ENCODE measurements at regions of chr15 and their contacts with region 1.

Region 1: GRCh38 chr15:69058830-69059556 is 44.5 kb downstream of the NOX5 start:
- DNase-seq: peak; percentile 86
- ATAC-seq: peak; percentile 55
- H3K4me3 Mint-ChIP-seq: no peak overlapping the region
- H3K27ac Mint-ChIP-seq: no peak overlapping the region
- H3K4me1 Mint-ChIP-seq: peaks cover 21% of the 10 kb centered on the region
- H3K27me3 Mint-ChIP-seq: peaks cover 13% of the 10 kb centered on the region

Region 2: DNA sequence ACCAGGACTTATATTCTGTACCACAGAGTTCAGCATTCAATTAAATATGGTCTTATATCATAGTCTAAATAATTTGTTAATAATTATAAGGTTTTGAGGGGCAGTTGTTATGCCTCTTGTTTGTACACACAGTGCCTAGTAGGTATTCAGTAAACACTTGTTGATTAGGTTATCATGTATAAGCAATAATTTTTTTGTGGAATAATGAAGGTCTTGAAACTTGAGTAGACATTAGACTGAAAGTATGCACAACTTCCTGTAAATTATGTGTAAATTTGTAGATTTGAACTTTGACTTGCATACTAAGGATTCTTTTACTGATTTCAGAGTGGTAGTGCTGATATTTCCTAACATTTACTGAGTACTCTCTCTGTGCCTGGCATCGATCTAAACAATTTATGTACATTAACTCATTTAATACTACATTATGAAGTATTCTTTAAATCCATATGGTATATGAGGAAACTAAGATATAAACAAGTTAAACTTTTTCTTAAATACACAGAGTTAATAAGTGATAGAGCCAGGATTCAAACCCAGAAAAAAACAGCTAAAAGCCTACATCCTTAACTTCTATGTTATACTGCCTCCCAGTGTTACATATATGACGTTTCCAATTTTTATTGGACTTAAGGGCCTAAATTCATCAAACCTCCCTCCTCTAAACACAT is 166.5 kb after region 1 on chr15:
- CTCF ChIA-PET with region 1: interaction called, 8 read pairs
- POLR2A ChIA-PET with region 1: no interaction called
- intact Hi-C with region 1: loop called (anchors 1 to 2 kb)
- DNase-seq: no peak
- ATAC-seq: no peak
- H3K4me3 Mint-ChIP-seq: no peak overlapping the region
- H3K27ac Mint-ChIP-seq: no peak overlapping the region
- H3K4me1 Mint-ChIP-seq: no peaks in the 10 kb centered on the region
- H3K27me3 Mint-ChIP-seq: no peaks in the 10 kb centered on the region

Region 3: GRCh38 chr15:69265347-69265955 is 206.5 kb after region 1 on chr15:
- CTCF ChIA-PET with region 1: interaction called, 4 read pairs
- POLR2A ChIA-PET with region 1: no interaction called
- intact Hi-C with region 1: loop called (anchors 1 kb)
- DNase-seq: no peak
- ATAC-seq: no peak
- H3K4me3 Mint-ChIP-seq: no peak overlapping the region
- H3K27ac Mint-ChIP-seq: no peak overlapping the region
- H3K4me1 Mint-ChIP-seq: no peaks in the 10 kb centered on the region
- H3K27me3 Mint-ChIP-seq: no peaks in the 10 kb centered on the region

Region 4: DNA sequence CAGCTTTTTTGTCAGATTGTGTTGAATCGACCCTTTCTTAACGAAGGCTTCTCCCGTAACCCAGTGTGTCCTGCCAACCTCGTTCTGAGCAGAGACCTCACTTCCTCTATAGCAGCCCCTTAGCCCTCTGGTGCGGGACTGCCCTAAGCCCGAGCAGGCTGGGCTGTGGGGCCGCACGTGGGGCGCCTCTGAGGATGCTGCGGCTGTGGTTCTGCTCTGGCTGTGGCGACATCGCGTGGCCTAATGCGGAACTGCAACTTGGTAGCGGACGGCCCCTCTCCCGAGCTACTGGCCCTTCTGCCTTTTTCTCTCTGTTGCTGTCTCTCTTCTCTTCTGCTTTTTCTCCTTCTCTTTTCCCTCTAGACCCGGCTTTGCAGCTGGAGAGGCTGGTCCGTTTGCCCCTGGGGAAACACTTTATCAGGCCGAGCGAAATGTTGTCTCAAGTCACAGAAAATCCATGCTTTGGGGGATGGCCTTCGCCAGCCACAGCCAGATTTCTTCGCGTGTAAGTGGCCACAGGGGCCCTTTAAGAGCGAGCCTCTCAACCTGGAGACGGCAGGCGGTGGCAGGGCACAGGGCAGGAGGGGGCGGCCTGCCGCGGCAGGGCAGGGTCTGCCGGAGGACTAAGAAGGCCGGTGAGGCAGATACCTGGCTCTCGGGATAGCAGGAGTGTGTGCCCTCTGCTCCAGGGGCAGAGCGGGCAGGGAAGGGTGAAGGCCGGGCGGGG is 335.7 kb after region 1 on chr15:
- CTCF ChIA-PET with region 1: interaction called, 4 read pairs
- POLR2A ChIA-PET with region 1: no interaction called
- intact Hi-C with region 1: loop called (anchors 1 kb)
- DNase-seq: peak; percentile 91
- ATAC-seq: peak; percentile 95
- H3K4me3 Mint-ChIP-seq: no peak overlapping the region
- H3K27ac Mint-ChIP-seq: no peak overlapping the region
- H3K4me1 Mint-ChIP-seq: peaks cover 10% of the 10 kb centered on the region
- H3K27me3 Mint-ChIP-seq: no peaks in the 10 kb centered on the region

Region 5: GRCh38 chr15:69462493-69463181 is 403.6 kb after region 1 on chr15:
- CTCF ChIA-PET with region 1: interaction called, 4 read pairs
- POLR2A ChIA-PET with region 1: no interaction called
- intact Hi-C with region 1: loop called (anchors 2 to 10 kb)
- DNase-seq: peak; percentile 95
- ATAC-seq: peak; percentile 94
- H3K4me3 Mint-ChIP-seq: peak overlapping the region; percentile 82
- H3K27ac Mint-ChIP-seq: peak overlapping the region; percentile 89
- H3K4me1 Mint-ChIP-seq: peaks cover 25% of the 10 kb centered on the region
- H3K27me3 Mint-ChIP-seq: no peaks in the 10 kb centered on the region

Region 6: GRCh38 chr15:69540622-69541021 is 481.6 kb after region 1 on chr15:
- CTCF ChIA-PET with region 1: no interaction called
- POLR2A ChIA-PET with region 1: no interaction called
- intact Hi-C with region 1: no loop called
- DNase-seq: no peak
- ATAC-seq: no peak
- H3K4me3 Mint-ChIP-seq: no peak overlapping the region
- H3K27ac Mint-ChIP-seq: no peak overlapping the region
- H3K4me1 Mint-ChIP-seq: no peaks in the 10 kb centered on the region
- H3K27me3 Mint-ChIP-seq: no peaks in the 10 kb centered on the region

Measured in activated CD4-positive, alpha-beta T cell treated with anti-CD3 and anti-CD28 coated beads for 36 hours (primary cell).